ENCODE measurements at regions of chr16 and their contacts with region 1.

Region 1: DNA sequence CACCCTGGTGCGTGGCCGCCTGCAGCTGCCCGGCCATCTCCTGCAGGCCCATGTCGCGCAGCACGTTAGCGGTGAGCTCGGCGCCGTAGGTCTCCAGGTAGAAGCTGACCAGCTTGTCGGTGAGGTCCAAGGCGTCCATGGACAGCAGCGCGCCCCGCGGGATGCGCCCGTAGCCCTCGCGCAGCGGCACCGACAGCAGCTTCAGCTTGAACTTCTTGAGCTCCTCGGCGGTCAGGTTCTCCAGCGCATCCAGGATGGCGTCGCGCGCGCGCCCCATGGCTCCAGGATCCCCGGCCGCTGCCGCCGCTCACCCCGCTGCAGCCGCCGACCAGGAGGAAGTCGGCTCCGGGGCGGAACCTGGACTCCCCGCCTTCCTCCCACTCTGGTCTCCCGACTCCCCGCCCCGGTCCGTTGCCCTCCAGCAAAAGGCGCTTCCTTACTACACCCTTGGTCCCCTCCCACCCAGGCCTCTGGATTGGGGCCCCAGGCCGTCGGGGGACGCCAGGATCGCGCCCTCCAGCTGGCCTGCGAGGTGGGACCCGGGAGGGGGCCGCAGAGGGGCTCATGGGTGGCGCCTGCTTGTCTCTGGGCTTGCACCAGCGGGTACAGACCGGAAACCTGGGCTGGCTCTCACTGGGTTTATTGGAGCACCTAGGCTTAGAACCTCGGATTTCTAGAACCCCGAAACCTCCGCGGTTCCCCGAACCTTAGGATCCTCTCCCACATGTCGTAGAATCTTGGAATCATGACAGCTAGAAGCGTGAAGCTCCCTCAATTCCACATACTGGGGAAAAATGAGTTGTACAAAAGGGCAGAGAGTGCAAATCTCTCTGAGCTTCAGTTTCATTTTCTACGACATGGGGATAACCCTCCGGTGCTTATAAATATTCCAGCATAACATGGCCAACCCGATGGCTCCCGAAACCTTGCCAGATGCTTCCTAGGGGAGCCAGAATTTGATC is at the start of gene PYCARD:
- DNase-seq: peak; percentile 46
- H3K4me3 Mint-ChIP-seq: peak within 1 kb of the TSS; percentile 87
- H3K27ac Mint-ChIP-seq: peak within 1 kb of the TSS; percentile 91
- H3K4me1 Mint-ChIP-seq: peaks cover 59% of the 10 kb centered on the region
- H3K27me3 Mint-ChIP-seq: peaks cover 5% of the 10 kb centered on the region
- total RNA-seq, gene PYCARD: 66.8 to 68.0 TPM

Region 2: GRCh38 chr16:31215287-31216162 is 12.8 kb after region 1 on chr16:
- CTCF ChIA-PET with region 1: interaction called, 12 read pairs
- POLR2A ChIA-PET with region 1: no interaction called
- DNase-seq: no peak
- H3K4me3 Mint-ChIP-seq: peak overlapping the region; percentile 43
- H3K27ac Mint-ChIP-seq: no peak overlapping the region
- H3K4me1 Mint-ChIP-seq: peaks cover 29% of the 10 kb centered on the region
- H3K27me3 Mint-ChIP-seq: peaks cover 43% of the 10 kb centered on the region

Region 3: DNA sequence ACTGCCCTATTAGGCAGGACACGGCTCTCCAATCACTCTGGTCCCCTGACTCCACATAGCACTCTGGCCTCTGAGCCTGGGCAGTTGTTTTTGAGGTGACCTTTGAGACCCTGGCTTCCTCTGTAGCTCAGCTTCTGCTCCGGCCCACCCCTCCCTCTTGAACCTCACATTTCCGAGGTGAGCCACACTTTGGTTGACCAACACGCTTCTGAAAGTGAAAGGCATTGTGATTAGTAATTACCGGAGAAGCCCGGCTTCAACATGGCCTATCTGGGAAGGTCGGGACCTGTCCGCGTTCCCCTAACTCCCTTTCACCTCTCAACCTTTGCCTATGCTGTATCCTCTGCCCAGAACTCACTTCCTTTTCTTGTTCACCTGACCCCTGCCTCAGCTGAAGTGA is 142.0 kb after region 1 on chr16:
- CTCF ChIA-PET with region 1: no interaction called
- POLR2A ChIA-PET with region 1: no interaction called
- DNase-seq: no peak
- H3K4me3 Mint-ChIP-seq: no peak overlapping the region
- H3K27ac Mint-ChIP-seq: no peak overlapping the region
- H3K4me1 Mint-ChIP-seq: peaks cover 12% of the 10 kb centered on the region
- H3K27me3 Mint-ChIP-seq: peaks cover 24% of the 10 kb centered on the region

Region 4: GRCh38 chr16:31365131-31365865 is 162.6 kb after region 1 on chr16:
- CTCF ChIA-PET with region 1: no interaction called
- POLR2A ChIA-PET with region 1: interaction called, 10 read pairs
- DNase-seq: no peak
- H3K4me3 Mint-ChIP-seq: no peak overlapping the region
- H3K27ac Mint-ChIP-seq: no peak overlapping the region
- H3K4me1 Mint-ChIP-seq: peaks cover 32% of the 10 kb centered on the region
- H3K27me3 Mint-ChIP-seq: no peaks in the 10 kb centered on the region

Measured in activated CD4-positive, alpha-beta T cell treated with anti-CD3 and anti-CD28 coated beads, Interleukin-2, amount 10 ng/mL, durations not matched to agents 7 days and 5 days (primary cell).